RWPE1 (cell line): ENCODE measurements at regions of chr9 and their contacts with region 1.

Region 1: DNA sequence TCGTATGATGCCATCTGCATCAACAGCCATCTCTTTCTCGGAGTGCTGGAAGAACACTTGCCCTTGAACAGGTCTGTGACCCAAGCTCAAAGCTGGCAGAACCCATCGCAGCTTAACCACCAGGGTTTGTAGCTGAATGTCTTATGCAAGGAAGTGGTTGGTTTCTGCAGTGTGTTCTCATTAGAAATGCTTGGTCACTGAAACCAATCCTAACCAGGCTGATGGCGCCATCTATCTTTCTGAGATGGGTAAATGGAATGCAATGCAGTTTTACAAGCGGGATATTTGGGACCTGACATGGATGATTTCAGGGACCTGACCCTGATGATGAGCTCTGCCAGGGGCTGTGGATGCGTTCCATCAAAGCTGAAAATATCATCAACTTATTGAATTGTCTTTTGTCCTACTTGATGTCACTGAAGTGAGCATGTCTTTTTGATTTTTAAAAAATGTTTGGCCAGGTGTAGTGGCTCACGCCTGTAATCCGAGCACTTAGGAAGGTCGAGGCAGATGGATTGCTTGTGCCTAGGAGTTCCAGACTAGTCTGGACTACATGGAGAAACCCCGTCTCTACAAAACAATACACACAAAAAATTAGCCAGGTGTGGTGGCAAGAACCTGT is 28.7 kb downstream of the DMRT3 start:
- DNase-seq: peak; percentile 31
- H3K27ac ChIP-seq: no peak overlapping the region
- CTCF ChIP-seq: peak; percentile 71

Region 2: DNA sequence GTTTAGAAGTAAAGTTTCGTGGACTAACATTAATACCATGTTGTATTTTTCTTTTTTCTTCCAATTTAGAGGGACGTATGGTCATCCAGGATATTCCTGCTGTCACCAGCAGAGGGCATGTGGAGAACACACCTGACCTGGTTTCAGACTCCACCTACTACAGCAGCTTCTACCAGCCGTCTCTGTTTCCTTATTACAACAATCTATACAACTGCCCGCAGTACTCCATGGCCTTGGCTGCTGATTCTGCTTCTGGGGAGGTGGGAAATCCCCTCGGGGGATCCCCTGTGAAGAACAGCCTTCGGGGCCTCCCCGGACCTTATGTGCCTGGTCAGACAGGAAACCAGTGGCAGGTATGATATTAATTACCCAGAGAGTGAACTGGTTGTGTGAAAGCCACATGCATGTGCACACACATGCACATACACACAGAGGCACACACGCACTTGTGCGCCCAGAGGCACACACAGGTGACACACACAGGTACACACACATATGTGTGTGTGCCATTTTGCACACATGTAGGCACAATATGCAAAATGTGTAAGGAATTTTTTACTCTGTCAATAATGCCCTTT is 111.2 kb before region 1 on chr9:
- CTCF ChIA-PET with region 1: interaction called, 15 read pairs
- POLR2A ChIA-PET with region 1: no interaction called
- DNase-seq: peak; percentile 62
- H3K27ac ChIP-seq: no peak overlapping the region
- CTCF ChIP-seq: peak; percentile 84